ENCODE measurements at regions of chr10 and their contacts with region 1.

Region 1: DNA sequence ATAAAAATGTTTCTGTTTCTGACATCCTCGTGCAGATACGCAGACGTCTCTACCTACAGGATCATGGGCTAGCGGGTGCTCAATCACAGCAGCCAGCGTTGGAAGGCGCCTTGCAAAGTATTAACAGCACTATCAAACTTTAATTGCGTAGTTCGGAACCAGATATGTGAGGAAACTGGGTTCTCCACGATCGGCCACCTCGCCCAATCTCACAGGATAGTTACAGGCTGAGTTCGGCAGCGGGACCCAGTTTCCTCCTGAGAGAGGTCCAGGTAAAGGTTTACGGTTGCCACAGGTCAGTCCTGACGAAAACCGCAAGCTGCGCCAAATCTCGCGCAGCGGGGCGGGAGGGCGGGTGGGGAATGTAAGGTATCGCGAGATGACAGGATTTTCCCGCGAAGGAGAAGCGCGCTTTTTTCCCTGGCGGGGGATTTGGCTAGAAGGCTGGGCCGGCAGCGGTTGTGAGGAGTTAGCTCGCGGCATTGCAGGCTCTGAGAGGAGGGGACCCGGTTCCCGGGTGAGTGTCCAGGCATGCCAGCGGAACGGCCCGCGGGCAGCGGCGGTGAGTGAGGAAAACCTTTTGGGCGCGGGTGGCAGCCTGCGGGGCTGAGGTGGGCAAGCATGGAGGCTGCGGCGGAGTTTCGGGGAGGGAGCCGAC is at the start of gene HELLS:
- DNase-seq: peak; percentile 78
- ATAC-seq: peak; percentile 88
- H3K4me3 ChIP-seq: peak within 1 kb of the TSS; percentile 84 to 100
- H3K27ac ChIP-seq: peak within 1 kb of the TSS; percentile 98
- H3K4me1 ChIP-seq: peaks cover 38% of the 10 kb centered on the region
- H3K27me3 ChIP-seq: no peaks in the 10 kb centered on the region
- CTCF ChIP-seq: no peak
- total RNA-seq, gene HELLS: 145 TPM

Region 2: DNA sequence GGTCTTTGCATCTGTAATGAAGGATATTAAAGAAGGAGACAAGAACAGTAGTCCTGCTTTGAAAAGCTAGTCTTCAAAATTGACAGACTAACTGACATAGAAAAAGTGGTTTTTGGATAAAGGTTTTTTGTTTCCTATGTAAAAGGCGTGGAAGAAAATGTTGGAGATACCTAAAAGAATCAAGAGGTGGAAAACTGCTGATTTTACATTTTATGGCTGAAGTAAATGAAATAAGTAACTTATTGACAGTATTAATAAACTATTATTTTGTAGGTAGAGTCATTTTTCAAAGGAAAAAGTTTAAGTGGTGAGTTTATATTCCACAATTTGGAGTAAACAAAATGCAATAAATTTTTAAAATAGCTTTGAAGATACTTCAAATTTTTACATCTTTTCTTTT is 12.5 kb before region 1 on chr10:
- CTCF ChIA-PET with region 1: no interaction called
- POLR2A ChIA-PET with region 1: interaction called, 15 read pairs
- in situ Hi-C with region 1: no loop called
- intact Hi-C with region 1: no loop called
- DNase-seq: no peak
- ATAC-seq: no peak
- H3K4me3 ChIP-seq: no peak overlapping the region
- H3K27ac ChIP-seq: no peak overlapping the region
- H3K4me1 ChIP-seq: no peaks in the 10 kb centered on the region
- H3K27me3 ChIP-seq: no peaks in the 10 kb centered on the region
- CTCF ChIP-seq: no peak

Region 3: GRCh38 chr10:94571528-94571927 is 26.0 kb after region 1 on chr10:
- CTCF ChIA-PET with region 1: no interaction called
- POLR2A ChIA-PET with region 1: no interaction called
- in situ Hi-C with region 1: no loop called
- intact Hi-C with region 1: no loop called
- DNase-seq: no peak
- ATAC-seq: no peak
- H3K4me3 ChIP-seq: no peak overlapping the region
- H3K27ac ChIP-seq: no peak overlapping the region
- H3K4me1 ChIP-seq: no peaks in the 10 kb centered on the region
- H3K27me3 ChIP-seq: no peaks in the 10 kb centered on the region
- CTCF ChIP-seq: no peak

Measured in Panc1 (cell line).